ENCODE measurements at regions of chr18 and their contacts with region 1.

Region 1: DNA sequence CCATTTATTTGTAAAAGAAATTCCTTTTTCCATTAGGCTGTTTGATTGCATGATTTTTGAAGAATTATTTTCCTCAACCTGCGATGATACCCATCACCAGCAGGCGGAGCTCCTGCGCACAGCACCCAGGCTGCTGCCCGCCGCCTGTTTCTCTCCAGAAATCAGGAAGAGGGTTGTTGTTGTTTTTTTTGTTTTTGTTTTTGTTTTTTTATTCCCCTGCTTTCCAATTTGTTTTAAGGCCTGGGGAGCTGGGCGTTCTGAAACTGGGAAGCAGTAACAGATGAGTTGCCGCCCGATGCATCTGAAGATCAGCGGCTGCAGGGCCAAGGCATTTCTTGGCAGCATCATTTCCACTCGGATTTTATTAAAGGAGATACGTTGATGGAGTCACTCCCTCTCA is 132.1 kb downstream of the MBP start:
- DNase-seq: no peak
- H3K4me3 ChIP-seq: no peak overlapping the region
- CTCF ChIP-seq: peak; percentile 99

Region 2: DNA sequence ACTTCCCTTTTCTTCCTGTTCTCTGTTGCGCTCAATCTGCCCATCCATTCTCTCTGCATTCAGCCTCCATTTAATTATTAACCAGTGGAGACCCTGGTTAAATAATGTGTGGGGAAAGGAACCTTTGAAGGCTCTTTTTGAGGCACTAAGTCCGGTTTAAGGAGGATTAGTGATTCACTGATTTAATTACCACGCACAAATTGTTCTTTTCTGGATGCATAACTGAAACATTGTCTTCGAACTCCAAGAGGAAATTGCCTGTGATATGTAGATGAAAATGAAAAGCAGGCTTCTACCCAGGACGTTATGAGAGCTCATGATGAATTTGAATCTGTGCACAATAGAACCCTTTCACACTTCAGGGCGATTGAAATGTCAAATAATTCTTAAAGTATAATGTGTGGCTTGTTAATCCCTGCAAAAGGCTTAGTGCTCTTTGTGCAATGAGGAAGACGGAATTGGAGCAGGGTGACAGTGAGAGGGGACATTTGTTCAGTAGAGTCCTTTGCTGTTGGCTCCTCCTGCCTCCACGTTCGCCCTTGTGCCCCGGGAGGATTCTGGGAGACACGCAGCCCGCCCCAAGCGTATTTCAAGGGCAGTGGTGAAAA is 229.2 kb before region 1 on chr18:
- in situ Hi-C with region 1: no loop called
- DNase-seq: no peak
- H3K4me3 ChIP-seq: no peak overlapping the region
- CTCF ChIP-seq: no peak

Region 3: DNA sequence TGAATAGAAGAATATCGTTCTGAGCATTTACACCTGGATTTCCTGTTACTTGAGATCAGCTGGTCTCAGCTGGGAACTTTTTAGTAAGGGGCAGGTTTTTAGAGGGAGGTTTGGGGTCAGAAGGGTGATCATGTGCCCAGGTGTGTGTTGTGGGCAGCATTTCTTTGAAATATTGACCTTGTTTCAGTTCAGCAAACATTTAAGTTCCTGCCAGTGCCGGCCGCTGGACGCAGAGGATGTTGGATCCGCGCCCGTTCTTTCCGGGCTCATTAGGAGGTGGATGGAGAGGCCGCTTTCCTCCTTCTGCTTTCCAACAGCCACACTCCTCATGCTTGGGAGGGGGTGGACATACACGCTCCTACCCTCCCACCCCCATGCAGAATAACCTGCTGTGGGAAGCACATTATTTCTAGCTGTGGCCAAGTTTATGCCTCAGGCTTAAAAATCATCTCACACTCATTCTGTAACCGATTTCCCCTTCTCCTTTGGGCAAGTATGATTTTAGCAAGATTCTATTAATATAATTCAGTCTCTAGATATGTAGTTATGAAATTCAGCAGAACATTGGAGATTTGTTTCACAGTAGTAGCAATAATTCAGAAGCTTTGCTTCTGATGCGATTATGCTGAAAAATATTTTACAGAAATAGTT is 46.8 kb before region 1 on chr18:
- in situ Hi-C with region 1: no loop called
- DNase-seq: peak; percentile 36
- H3K4me3 ChIP-seq: no peak overlapping the region
- CTCF ChIP-seq: no peak

Region 4: DNA sequence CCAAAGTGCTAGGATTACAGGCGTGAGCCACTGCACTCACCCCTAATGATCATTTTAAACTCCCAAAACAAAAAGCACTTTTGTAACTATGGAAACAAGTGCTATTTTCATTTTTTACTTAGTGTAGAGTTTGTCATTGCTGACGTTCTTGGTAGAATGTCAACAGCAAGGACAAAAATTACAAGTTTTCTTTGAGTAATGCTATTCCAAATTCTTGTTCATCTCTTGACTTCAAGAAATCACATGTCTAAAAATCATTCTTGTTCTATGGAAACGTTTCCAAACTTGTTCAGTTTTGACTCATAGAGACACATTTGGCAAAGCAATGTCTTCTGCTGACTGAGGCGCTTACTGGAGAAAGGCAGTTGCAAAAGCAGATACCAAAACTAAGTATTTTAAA is 49.4 kb after region 1 on chr18:
- in situ Hi-C with region 1: loop called (anchors 5 kb)
- DNase-seq: no peak
- H3K4me3 ChIP-seq: no peak overlapping the region
- CTCF ChIP-seq: no peak